ENCODE measurements at regions of chr1 and their contacts with region 1.

Region 1: DNA sequence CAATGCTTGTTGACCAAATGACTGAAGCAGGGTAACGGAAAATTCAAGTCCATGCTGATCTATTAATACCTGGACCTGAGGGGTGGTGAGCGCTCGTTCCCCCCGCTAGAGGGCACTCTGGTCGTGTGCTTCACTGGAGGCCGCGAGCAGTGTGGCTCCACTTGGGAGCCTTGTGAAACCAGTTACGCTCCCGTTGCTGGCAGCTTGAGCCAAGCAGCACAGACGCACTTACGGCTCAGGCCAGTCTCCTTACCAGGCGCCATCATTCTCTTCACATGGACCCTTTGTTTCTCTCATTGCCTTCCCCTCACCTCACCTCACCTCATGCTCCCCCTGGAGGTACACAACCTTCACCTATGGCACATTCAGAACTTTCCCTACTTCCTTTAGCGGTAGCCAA is 49.7 kb upstream of the TSPAN2 start:
- DNase-seq: peak; percentile 85
- H3K27ac ChIP-seq: no peak overlapping the region
- CTCF ChIP-seq: peak; percentile 90

Region 2: DNA sequence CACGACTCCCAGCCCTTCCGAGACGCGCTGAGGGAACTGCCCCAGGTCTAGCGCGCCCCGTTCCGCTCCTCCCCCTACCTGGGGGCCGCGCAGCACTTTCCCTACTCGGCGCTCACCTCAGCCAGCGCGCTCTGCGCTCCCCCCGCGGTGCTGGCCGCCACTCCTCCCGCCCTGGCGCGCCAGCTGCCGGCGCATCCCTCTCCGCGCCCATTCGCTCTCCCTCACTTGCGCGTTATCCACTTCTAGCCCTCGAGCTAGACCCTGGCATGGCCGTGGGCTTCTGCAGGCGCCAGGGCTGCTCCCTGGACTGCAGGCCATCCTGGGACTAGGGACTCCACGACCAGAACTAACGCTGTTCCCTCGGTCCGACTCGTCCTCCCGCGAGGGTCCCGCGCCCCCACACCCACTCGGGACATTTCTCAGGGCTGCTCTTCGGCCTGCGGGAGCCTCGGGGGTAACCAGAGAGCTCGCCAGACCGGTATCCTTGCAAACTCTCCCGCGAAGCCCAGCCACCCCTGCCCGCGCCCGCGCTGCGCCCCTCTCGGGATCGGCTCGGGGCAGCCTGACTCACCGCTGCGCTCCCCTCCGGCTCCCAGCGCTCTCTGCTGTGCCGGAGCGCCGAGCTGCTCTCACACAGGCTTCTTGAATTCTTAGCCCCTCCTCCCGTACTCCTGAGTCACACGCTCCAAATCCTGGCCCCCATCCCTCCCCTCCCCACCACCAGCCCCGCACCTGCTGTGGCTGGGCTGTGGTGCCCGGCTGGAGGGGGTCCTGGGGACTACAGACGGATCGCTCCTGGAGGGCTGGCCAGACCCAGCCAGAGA is 198.9 kb after region 1 on chr1 and contains the start of gene NGF:
- CTCF ChIA-PET with region 1: interaction called, 10 read pairs
- POLR2A ChIA-PET with region 1: no interaction called
- DNase-seq: peak; percentile 73
- H3K27ac ChIP-seq: peak within 1 kb of the TSS; percentile 55
- CTCF ChIP-seq: no peak

Region 3: DNA sequence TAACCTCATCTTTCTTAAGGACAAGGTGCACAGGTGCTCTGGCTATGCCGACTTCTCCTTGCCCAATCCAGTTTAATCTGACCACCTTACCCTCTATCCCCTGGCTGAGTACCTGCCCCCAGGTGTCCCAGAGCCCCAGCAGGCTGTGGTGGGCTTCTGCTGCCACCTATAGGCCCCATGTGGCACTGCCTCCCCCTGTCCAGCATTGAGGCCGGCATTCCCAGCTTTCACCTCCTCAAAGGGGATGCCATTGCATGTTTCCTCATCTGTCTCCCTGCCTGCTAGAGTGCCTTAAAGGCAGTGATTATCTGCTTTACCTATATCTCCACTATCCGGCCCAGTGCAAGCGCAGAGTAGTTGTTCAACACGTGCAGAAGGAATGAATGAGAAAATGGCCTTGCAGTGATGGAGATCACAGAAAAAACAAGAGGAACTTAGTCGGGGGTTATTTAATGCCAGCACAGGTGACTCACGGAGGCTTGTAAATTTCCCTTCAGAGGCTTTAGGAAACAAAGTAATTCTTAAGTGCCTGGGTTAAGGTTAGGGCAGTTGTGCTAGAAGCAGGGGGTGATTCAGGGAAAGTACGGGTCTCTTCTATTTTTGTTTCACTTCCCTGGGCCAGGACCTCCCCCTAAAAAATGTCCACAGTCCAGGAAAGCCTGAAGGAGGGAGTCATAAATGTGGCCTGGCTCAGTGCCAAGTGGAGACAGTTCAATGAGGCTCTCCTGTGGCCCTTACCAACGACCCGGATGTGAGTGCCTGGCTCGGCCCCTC is 330.9 kb after region 1 on chr1:
- CTCF ChIA-PET with region 1: interaction called, 18 read pairs
- POLR2A ChIA-PET with region 1: no interaction called
- DNase-seq: peak; percentile 67
- H3K27ac ChIP-seq: peak overlapping the region; percentile 77
- CTCF ChIP-seq: peak; percentile 86

Region 4: GRCh38 chr1:115595279-115596079 is 456.5 kb after region 1 on chr1:
- CTCF ChIA-PET with region 1: interaction called, 18 read pairs
- POLR2A ChIA-PET with region 1: no interaction called
- DNase-seq: peak; percentile 77
- H3K27ac ChIP-seq: peak overlapping the region; percentile 36; the same call in 1 of the 2 replicates
- CTCF ChIP-seq: peak; percentile 94

Measured in RWPE1 (cell line).